Activated CD4-positive, alpha-beta memory T cell treated with anti-CD3 and anti-CD28 coated beads, Interleukin-2, amount 10 ng/mL, durations not matched to agents 7 days and 5 days (primary cell): ENCODE measurements at regions of chr15 and their contacts with region 1.

Region 1: DNA sequence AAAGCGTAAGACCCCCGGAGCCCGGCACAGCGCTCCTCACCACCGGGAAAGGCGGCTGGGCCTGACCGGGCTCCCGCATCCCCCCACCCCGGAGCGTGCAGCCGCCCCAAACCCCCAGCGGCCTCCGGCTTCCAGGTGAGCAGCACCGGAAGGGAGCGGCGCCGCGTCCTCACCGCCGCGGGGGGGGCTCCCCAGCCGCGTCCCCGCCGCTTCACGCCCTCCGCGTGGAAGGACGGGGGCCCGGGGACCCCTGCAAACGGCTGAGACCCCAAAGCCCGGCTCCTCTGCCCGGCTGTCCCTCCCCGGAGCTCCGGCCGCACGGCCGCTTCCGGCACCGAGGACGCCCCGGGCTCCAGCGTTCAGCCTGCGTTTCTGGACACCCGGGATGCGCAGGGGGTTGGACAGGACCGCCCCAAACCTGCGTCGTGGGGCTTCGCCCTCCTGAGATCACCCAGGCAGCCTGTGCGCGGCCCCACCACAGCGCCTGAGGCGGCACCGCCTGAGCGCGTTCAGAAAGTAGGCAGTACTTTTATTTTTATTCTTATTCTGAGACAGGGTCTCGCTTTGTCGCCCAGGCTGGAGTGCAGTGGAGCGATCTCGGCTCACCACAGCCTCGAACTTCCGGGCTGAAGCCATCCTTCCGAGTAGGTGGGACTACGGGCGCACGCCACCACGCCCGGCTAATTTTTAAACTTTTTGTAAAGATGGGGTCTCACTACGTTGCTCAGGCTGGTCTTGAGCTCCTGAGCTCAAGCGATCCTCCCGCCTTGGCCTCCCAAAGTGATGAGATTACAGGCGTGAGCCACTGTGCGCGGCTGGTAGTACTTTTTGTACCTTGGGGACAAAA is 51.6 kb upstream of the BLM start:
- DNase-seq: peak; percentile 81
- H3K4me3 Mint-ChIP-seq: peak overlapping the region; percentile 82
- H3K27ac Mint-ChIP-seq: peak overlapping the region; percentile 94
- H3K4me1 Mint-ChIP-seq: peaks cover 60% of the 10 kb centered on the region
- H3K27me3 Mint-ChIP-seq: peaks cover 21% of the 10 kb centered on the region

Region 2: DNA sequence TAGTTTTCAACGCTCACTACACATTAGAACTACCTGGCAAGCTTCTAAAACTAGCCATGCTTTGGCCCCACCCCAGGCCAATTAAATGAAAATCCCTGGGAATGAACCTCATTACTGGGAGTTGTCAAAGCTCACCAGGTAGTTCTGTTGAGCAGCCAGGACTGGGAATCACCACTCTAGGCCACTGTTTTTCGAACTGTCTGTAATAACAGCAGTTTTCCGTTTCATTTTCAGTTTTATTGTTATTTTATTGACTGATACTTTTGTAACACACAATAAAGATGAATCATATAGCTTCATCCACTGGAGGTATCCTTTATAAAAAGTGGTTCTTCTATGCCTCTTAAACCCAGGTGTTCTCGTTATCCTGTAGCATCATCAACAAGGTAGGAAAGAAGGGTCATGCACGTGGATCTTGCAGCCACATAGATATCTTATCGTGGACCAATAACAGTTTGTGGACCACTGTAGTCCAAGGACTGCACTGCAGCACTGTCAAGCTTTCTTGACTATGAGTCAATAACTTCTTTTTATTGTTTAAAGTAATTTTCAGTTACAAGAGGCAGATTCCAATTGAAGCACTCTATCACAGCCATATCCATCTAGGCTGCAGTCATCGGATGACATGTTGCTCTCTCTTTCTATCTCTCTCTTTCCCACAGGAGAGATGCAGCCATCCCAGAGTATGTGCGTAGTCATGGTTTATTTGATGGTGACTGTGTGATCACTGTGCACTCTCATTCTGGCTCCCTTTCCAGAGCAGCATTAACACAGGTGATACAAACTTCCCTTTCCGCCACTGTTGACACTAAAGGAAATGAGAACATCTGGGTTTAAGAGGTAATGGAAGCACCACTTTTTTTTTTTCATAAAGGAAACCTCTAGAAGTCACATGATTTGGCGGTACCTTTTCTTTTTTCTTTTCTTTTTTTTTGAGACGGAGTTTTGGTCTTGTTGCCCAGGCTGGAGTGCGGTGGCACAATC is 12.6 kb after region 1 on chr15:
- CTCF ChIA-PET with region 1: interaction called, 5 read pairs
- POLR2A ChIA-PET with region 1: interaction called, 60 read pairs
- DNase-seq: no peak
- H3K4me3 Mint-ChIP-seq: peak overlapping the region; percentile 38
- H3K27ac Mint-ChIP-seq: peak overlapping the region; percentile 94
- H3K4me1 Mint-ChIP-seq: peaks cover 44% of the 10 kb centered on the region
- H3K27me3 Mint-ChIP-seq: peaks cover 11% of the 10 kb centered on the region

Region 3: DNA sequence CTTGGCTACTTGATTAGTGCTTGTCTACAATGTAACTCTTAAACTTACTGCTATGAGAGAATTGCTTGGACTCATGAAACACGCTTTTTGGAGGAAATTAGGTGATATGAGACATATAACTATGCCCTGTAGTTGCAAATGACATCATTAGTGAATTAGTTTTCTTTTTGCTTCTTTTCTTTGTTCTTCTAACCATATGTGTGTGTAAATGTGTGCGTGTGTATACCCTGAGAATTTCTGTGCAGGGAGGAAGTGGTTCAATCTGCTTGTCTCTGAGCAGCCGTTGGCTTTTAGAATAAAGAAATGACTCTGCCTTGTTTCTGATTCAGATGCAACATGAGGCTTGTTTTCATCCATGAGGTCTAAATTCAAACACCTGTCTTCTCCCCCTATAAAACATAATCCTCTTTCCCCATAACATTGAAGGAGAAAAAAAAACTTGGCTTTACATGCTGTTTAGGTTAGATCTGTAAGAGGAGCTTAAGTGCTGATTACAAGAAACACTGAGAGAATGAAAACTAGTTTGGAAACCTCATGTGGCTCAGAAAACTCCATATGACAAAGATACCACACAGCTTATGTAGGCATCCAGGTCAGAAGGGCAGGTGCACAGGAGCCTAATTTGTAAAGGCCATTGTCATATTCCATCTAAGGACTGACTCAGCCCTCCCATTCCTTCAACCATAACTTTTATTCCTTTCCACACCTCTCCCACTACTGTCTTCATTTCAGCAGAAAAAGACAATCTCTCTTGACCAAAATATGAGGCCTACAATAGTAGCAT is 21.1 kb after region 1 on chr15:
- CTCF ChIA-PET with region 1: no interaction called
- POLR2A ChIA-PET with region 1: interaction called, 57 read pairs
- DNase-seq: peak; percentile 56
- H3K4me3 Mint-ChIP-seq: peak overlapping the region; percentile 15
- H3K27ac Mint-ChIP-seq: peak overlapping the region; percentile 100
- H3K4me1 Mint-ChIP-seq: peaks cover 54% of the 10 kb centered on the region
- H3K27me3 Mint-ChIP-seq: no peaks in the 10 kb centered on the region

Region 4: DNA sequence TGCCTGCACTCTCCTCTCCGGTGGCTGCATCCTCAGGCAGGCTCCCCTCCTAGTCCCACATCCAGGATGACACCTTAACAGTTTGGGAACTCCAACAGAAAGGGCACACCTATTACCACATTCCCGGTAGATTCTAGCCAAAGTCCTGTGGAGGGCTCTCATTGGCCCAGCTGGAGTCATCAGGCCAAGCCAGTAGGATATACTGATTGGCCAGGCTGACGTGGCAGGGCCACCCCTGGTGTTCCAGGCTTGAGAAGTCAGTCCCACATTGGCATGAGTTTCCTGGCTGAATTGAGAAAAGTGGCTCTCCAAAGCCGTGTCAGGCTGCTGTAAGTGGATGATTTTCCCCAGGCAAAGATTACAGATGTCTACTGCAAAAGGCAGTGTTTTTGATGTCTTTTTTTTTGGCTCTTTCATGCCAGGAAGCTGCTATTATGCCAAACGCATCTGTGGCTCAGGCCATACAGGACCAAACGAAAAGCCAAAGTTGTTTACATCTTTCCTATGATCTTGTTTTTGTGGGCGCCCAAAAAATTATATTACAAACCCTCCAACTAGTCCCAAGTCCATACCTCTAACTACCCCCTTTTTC is 45.0 kb after region 1 on chr15:
- CTCF ChIA-PET with region 1: no interaction called
- POLR2A ChIA-PET with region 1: no interaction called
- DNase-seq: no peak
- H3K4me3 Mint-ChIP-seq: no peak overlapping the region
- H3K27ac Mint-ChIP-seq: no peak overlapping the region
- H3K4me1 Mint-ChIP-seq: peaks cover 6% of the 10 kb centered on the region
- H3K27me3 Mint-ChIP-seq: no peaks in the 10 kb centered on the region